Caco-2 (cell line): ENCODE measurements at regions of chr1 and their contacts with region 1.

Region 1: GRCh38 chr1:42958488-42959319 is at the start of gene SLC2A1:
- DNase-seq: peak; percentile 94 to 96
- H3K4me3 ChIP-seq: peak within 1 kb of the TSS; percentile 95
- H3K4me3 Mint-ChIP-seq: peak within 1 kb of the TSS; percentile 93
- H3K27ac Mint-ChIP-seq: peak within 1 kb of the TSS; percentile 93
- H3K4me1 ChIP-seq: peaks cover 54% of the 10 kb centered on the region
- H3K4me1 Mint-ChIP-seq: peaks cover 41% of the 10 kb centered on the region
- H3K27me3 ChIP-seq: no peaks in the 10 kb centered on the region
- H3K27me3 Mint-ChIP-seq: no peaks in the 10 kb centered on the region
- CTCF ChIP-seq: no peak
- total RNA-seq, gene SLC2A1: 422 and 437 TPM in 2 replicates

Region 2: DNA sequence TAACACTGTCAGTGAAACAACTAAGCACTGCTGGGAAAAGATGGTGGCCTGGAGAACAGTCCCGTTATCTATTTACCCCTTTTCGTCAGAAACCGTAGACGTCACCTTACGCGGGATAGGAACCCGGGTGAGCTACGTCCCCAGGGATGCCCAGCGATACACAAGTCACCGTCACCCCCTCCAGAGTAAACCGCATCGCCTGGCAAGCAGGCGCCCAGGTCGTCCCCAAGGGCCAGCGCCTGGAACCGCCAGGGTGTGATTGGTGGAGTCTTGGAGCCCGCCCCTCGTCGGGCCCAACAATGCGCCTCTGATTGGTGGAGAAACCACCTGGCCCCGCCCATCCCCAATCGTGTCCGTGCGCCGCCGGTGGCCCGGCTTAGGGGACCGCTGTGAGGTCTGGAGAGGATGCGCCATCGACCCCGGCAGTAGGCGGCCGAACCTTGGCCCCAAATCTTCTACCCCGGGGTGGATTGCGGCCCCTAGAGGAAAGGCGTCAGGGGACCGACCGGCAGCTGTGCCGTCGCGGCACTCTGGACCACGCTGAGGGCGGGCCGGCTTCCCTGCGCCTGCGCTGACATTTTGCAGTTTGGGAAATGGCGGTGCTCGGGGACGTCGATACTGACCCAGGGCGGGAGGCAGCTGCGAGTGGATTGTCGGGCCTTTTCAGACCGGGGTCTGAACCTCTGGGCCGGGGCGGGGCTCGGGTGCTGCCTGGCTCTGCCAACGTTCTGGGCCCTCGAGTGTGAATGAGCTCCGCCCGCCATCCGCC is 34.4 kb before region 1 on chr1:
- CTCF ChIA-PET with region 1: interaction called, 3 read pairs
- POLR2A ChIA-PET with region 1: no interaction called
- intact Hi-C with region 1: loop called (anchors 5 kb)
- DNase-seq: peak; percentile 67 to 80
- H3K4me3 ChIP-seq: no peak overlapping the region
- H3K4me3 Mint-ChIP-seq: peak overlapping the region; percentile 51
- H3K27ac Mint-ChIP-seq: peak overlapping the region; percentile 58
- H3K4me1 ChIP-seq: peaks cover 12% of the 10 kb centered on the region
- H3K4me1 Mint-ChIP-seq: peaks cover 40% of the 10 kb centered on the region
- H3K27me3 ChIP-seq: no peaks in the 10 kb centered on the region
- H3K27me3 Mint-ChIP-seq: no peaks in the 10 kb centered on the region
- CTCF ChIP-seq: no peak